ENCODE measurements at regions of chr1 and their contacts with region 1.

Region 1: DNA sequence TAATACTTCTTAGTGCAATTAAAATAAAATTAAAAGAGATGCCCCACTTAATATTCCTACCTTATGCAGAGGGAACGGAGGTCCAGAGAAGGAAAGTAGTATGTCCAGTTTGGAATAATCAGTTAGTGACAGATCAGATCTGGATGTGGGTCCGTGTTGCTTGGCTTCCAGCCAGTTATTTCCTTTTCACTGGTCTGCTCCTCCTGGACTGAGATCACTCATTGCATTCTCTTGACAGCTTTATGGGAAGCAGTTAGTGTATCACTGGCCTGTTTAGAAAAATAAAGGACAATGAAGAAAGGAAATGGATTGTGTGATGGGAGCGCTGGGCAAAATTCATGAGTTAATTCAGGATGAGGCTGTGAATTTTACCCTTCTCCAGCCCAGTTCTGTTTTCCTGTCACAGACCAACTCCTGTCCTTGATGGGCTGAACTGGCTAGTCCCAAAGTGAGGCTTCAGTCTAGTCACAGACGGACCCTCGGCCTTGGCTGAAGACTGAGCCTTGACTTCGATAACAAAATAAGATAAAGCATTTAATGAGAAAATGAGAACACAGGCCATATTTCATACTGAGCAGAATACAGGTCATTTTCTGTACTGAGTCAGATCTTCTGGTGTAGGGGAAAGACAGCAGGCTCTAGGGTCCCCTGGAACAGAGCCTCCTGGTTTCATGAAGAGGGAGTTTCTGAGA is 85.2 kb upstream of the TRABD2B start:
- H3K4me3 ChIP-seq: no peak overlapping the region
- H3K27ac ChIP-seq: peak overlapping the region; percentile 67
- H3K4me1 ChIP-seq: peaks cover 24% of the 10 kb centered on the region
- CTCF ChIP-seq: no peak

Region 2: DNA sequence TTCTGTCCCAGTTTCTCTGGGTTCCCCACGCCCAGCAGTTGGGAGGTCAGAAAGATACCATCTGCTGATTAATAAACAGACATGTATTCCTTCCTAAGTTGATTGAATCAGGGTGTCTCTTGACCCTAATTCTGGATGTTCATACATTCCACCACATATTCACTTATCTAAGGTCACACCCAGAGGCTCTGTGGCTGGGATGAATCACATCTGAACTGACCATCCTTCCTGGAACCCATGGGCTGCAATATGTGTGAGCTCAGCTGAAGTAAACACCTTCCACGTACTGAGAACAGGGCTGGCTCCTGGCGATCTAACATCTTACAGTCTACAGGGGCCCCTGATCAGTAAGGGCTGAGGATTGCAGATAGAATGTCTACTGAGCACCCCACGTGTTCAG is 64.7 kb before region 1 on chr1:
- CTCF ChIA-PET with region 1: no interaction called
- POLR2A ChIA-PET with region 1: no interaction called
- H3K4me3 ChIP-seq: no peak overlapping the region
- H3K27ac ChIP-seq: no peak overlapping the region
- H3K4me1 ChIP-seq: no peaks in the 10 kb centered on the region
- CTCF ChIP-seq: no peak

Region 3: GRCh38 chr1:48093696-48094528 is 11.5 kb after region 1 on chr1:
- CTCF ChIA-PET with region 1: interaction called, 18 read pairs
- POLR2A ChIA-PET with region 1: no interaction called
- H3K4me3 ChIP-seq: peak overlapping the region; percentile 17
- H3K27ac ChIP-seq: no peak overlapping the region
- H3K4me1 ChIP-seq: no peaks in the 10 kb centered on the region
- CTCF ChIP-seq: peak; percentile 77